MCF 10A (cell line): ENCODE measurements at regions of chr17 and their contacts with region 1.

Region 1: DNA sequence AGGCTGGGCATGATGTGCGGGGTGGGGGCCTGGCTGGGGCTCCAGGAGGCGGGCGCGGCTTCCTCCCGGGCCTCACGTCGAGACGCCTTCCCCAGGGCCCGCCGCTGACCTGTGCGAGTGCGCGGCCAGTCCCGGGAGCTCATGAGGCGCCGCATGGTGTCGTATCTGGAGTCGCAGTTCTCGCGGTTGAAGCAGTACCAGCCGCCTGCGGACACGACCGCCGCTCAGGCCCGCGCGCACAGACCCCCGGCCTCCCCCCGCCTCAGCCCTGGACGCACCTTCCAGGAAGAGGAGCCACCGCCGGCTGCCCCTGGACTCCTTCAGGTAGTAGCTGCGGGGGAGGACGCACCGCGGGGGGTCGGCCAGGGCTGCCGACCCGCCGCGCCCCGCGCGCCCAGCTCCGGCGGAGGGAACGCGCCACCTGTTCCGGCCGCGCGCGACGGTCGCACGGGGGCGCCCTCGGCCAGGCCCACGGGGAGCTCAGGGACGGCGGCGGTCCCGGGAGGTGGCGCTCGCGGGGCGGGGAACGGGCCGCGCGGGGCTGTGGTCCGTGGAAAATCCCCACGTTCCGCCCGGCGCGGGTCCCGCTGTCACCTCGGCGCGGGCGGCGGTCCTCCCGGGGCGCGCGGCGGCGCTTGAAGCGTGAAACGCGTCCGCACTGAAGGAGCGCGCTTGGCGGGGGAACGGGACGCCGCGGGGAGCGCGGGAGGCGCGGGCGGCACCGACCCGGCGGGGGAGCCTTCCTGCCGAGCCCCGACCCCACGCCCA is 1.4 kb downstream of the NOTUM start:
- DNase-seq: peak; percentile 49
- H3K4me3 Mint-ChIP-seq: no peak overlapping the region
- H3K27ac Mint-ChIP-seq: no peak overlapping the region
- H3K4me1 Mint-ChIP-seq: peaks cover 3% of the 10 kb centered on the region
- H3K27me3 Mint-ChIP-seq: peaks cover 9% of the 10 kb centered on the region
- CTCF ChIP-seq: peak; percentile 98

Region 2: DNA sequence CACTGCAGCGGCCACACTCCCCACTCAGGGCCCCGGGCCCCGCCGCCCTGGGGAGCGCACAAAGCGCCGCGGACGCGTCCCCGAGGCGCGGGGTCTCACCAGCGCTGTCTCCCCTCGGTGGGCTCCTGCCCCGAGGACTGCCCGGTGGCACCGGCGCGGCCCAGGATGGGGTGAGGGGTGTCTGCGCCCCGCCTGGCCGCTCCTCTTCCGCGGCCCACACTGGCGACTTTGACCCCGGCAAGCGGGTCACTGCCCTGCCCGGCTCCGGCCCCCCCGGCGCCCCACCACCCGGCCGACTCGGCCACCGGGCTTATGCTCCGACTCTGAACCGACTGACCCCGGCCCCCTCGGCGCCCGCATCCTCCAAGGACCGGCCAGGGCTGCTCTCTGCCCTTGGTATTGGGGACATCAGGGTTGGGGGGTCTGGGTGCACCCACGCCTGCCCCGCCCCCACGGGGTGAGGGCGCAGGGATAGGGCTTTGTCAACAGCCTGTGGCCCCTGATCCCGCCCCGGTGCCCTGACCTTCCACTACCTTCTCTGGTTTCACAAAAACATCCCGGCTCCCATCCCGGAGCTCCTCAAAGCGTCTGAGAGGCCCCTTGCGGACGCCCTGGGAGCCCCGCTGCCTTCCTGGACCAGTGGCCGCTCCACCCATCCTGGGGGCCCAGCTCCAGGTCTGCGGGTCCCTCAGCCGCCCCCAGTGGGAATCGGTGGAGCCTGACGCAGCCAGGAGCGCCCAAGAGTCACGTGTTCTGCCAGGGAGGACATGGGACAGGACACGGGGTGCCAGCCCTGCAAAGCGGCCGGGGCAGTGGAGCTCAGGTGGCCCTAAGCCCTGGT is 154.8 kb before region 1 on chr17:
- CTCF ChIA-PET with region 1: no interaction called
- POLR2A ChIA-PET with region 1: no interaction called
- intact Hi-C with region 1: no loop called
- DNase-seq: no peak
- H3K4me3 Mint-ChIP-seq: no peak overlapping the region
- H3K27ac Mint-ChIP-seq: no peak overlapping the region
- H3K4me1 Mint-ChIP-seq: peaks cover 9% of the 10 kb centered on the region
- H3K27me3 Mint-ChIP-seq: peaks cover 88% of the 10 kb centered on the region
- CTCF ChIP-seq: no peak

Region 3: GRCh38 chr17:81911277-81911961 is 48.1 kb before region 1 on chr17 and contains the start of gene PCYT2:
- CTCF ChIA-PET with region 1: no interaction called
- POLR2A ChIA-PET with region 1: no interaction called
- intact Hi-C with region 1: no loop called
- DNase-seq: peak; percentile 89
- H3K4me3 Mint-ChIP-seq: peak within 1 kb of the TSS; percentile 72
- H3K27ac Mint-ChIP-seq: no peak within 1 kb of the TSS
- H3K4me1 Mint-ChIP-seq: peaks cover 27% of the 10 kb centered on the region
- H3K27me3 Mint-ChIP-seq: no peaks in the 10 kb centered on the region
- CTCF ChIP-seq: no peak
- total RNA-seq, gene PCYT2: 26.5 and 26.8 TPM in 2 replicates

Region 4: GRCh38 chr17:81922566-81923301 is 36.8 kb before region 1 on chr17:
- CTCF ChIA-PET with region 1: no interaction called
- POLR2A ChIA-PET with region 1: no interaction called
- intact Hi-C with region 1: no loop called
- DNase-seq: no peak
- H3K4me3 Mint-ChIP-seq: peak overlapping the region; percentile 71
- H3K27ac Mint-ChIP-seq: peak overlapping the region; percentile 81
- H3K4me1 Mint-ChIP-seq: peaks cover 21% of the 10 kb centered on the region
- H3K27me3 Mint-ChIP-seq: no peaks in the 10 kb centered on the region
- CTCF ChIP-seq: no peak

Region 5: DNA sequence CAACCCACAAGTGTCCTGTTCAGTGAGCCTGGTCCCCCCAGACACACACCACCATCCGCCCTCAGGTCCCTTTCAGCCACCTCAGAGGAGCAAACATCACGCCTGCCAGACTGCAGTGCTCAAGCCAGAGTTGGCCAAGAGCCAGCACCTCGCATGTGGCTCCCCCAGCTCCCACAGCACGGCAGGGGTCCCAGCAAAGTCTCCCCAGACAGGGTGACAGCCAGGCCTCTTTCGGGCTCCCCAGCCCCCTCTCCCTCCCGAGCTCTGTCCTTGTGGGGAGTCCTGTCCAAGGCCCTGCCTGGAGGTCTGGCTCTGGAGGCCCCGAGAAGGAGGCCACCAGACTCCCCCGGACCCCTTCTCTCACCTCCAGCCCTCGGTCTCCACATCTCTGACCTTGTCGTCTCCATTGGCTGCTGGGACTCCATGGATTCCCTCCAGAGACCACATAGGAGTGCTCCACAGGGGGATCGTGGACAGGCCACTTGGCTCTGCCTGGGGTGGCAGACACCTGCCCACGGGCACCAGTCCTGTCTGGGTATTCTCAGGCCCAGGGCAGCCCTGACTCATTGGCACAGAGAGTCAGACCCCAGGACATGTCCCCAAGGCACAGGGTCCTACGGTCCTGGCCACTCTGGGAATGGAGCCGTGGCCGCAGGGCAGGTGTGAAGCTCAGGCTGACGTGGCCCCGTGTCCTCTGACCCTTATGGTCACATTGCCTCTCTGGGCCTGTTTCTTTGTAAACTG is 10.7 kb before region 1 on chr17:
- CTCF ChIA-PET with region 1: interaction called, 17 read pairs
- POLR2A ChIA-PET with region 1: no interaction called
- intact Hi-C with region 1: no loop called
- DNase-seq: no peak
- H3K4me3 Mint-ChIP-seq: no peak overlapping the region
- H3K27ac Mint-ChIP-seq: no peak overlapping the region
- H3K4me1 Mint-ChIP-seq: no peaks in the 10 kb centered on the region
- H3K27me3 Mint-ChIP-seq: no peaks in the 10 kb centered on the region
- CTCF ChIP-seq: no peak

Region 6: DNA sequence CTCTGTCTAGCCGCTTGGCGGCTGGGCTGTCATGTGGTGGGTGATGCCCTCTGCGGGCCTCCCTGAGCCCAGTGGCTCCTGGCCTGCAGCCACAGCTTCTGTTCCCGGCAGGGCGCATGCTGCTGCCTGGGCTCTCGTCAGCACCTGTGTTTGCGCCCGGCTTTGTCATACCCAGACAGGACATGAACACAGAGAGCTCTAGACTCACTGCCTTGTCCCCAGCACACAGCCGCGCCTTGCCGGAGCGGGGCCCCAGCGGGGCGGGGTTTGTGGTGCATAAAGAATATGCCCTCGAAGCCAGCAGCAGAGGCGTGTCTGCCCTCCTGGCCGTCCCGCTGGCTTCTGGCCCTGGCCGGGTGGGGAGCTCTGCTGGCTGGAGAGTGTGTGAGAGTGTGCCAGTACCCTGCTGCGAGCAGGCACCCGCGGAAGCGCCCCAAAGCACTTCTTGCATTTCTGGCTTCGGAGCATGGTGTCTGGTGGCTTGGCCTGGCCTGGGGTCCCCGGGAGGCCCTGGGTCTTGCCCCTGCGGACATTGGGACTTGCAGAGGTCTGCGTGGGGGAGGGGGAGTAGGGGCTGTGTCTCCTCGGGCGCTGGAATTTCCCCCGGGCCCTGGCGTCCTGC is 32.2 kb after region 1 on chr17:
- CTCF ChIA-PET with region 1: interaction called, 15 read pairs
- POLR2A ChIA-PET with region 1: interaction called, 10 read pairs
- intact Hi-C with region 1: no loop called
- DNase-seq: peak; percentile 92
- H3K4me3 Mint-ChIP-seq: peak overlapping the region; percentile 56
- H3K27ac Mint-ChIP-seq: peak overlapping the region; percentile 31
- H3K4me1 Mint-ChIP-seq: peaks cover 13% of the 10 kb centered on the region
- H3K27me3 Mint-ChIP-seq: no peaks in the 10 kb centered on the region
- CTCF ChIP-seq: no peak

Region 7: DNA sequence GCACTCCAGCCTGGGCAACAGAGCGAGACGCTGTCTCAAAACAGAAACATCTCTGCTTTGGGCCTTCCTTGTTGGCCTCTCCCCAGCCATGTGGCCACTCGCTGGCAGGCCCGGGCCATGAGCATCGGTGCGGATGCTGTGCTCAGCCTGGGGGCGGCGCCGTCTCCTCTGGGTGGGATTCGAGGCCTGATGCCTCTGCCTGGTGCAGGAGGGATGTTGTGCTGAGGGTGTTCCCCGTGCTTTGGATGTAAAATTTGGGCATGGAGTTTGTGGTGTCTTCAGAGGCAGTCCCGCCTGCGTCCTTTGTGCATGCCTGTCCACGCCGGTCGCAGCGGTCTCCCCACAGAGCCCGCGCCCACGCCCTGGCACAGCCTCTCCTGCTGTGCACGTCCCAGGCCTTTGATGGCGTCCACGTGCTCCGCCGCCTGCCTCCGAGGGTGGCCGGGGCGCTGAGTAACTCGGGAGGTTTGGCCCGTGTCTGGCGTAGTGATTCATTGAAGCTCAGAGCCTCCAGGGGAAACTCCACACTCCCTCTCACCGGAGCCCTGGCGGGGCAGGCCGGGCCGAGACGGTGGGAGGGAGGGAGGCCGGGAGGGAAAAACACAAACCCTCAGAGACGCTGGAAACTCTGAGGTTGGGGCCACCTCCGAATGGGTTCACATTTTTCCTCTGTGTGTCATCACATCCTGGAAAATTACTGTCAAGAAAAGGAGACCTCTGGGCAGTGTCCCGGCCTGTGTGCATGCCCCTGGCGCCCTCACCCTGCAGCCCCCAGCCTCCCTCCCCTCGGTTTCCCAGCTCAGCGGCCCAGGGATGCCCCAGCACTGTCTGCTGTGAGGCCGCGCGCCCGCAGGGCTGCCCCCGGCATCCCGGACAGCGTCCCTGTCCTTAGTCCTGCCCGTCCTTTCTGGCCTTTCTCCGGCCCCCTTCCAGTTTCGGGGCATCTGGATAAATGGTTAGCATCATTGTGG is 44.1 kb after region 1 on chr17:
- CTCF ChIA-PET with region 1: interaction called, 10 read pairs
- POLR2A ChIA-PET with region 1: interaction called, 9 read pairs
- intact Hi-C with region 1: no loop called
- DNase-seq: peak; percentile 95
- H3K4me3 Mint-ChIP-seq: no peak overlapping the region
- H3K27ac Mint-ChIP-seq: no peak overlapping the region
- H3K4me1 Mint-ChIP-seq: peaks cover 10% of the 10 kb centered on the region
- H3K27me3 Mint-ChIP-seq: no peaks in the 10 kb centered on the region
- CTCF ChIP-seq: no peak

Region 8: DNA sequence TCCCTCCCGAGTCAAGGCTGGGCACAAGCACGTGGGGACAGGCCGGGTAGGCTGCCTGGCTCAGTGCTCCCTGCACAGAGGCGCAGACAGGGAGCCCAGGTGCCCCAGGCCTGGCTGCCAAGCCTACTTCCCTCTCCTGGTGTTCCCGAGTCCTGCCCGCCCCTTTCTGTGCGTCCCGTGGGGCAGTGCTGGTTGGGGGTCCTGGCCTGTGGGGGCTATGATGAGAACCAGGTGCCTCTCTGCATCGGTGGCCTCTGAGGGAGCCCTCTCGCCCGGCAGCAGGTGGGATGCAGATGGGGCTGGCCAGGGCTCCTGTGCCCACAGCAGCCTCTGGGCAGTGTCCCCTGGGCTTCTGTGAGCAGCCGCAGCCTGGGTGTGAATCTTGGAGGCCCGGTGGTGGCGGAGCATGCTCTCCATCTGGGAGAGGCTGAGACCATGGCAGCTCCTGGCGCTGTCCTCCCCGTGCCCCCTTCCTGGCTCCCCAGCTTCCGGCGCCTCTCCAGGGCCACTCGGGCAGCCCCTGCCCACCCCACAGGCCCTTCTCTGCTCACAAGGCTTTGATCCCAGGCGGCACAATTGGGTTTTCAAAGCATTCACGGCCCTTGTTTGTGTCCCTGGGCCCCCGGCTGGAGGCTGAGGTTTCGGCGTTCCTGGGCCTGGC is 55.9 kb after region 1 on chr17:
- CTCF ChIA-PET with region 1: interaction called, 74 read pairs
- POLR2A ChIA-PET with region 1: interaction called, 7 read pairs
- intact Hi-C with region 1: no loop called
- DNase-seq: no peak
- H3K4me3 Mint-ChIP-seq: no peak overlapping the region
- H3K27ac Mint-ChIP-seq: no peak overlapping the region
- H3K4me1 Mint-ChIP-seq: peaks cover 1% of the 10 kb centered on the region
- H3K27me3 Mint-ChIP-seq: no peaks in the 10 kb centered on the region
- CTCF ChIP-seq: no peak